ENCODE measurements at regions of chrX and their contacts with region 1.

Region 1: GRCh38 chrX:56248492-56248891 is 16.3 kb downstream of the KLF8 start:
- DNase-seq: peak; percentile 40
- ATAC-seq: peak; percentile 95
- H3K4me3 ChIP-seq: no peak overlapping the region
- H3K27ac ChIP-seq: no peak overlapping the region
- H3K4me1 ChIP-seq: peaks cover 3% of the 10 kb centered on the region; the same call in 1 of the 2 replicates
- H3K27me3 ChIP-seq: no peaks in the 10 kb centered on the region
- CTCF ChIP-seq: peak; percentile 70 to 88 (median 75)
- EP300 ChIP-seq: no peak
- POLR2A ChIP-seq: no peak
- RAD21 ChIP-seq: peak; percentile 95

Region 2: GRCh38 chrX:54683655-54684054 is 1564.8 kb before region 1 on chrX:
- CTCF ChIA-PET with region 1: no interaction called
- POLR2A ChIA-PET with region 1: no interaction called
- RAD21 ChIA-PET with region 1: no interaction called
- SMC1A ChIA-PET with region 1: no interaction called
- in situ Hi-C with region 1: no loop called
- intact Hi-C with region 1: no loop called
- DNase-seq: no peak
- ATAC-seq: no peak
- H3K4me3 ChIP-seq: no peak overlapping the region
- H3K27ac ChIP-seq: no peak overlapping the region
- H3K4me1 ChIP-seq: no peaks in the 10 kb centered on the region
- H3K27me3 ChIP-seq: no peaks in the 10 kb centered on the region
- CTCF ChIP-seq: no peak
- EP300 ChIP-seq: no peak
- POLR2A ChIP-seq: no peak
- RAD21 ChIP-seq: no peak

Region 3: GRCh38 chrX:55160685-55161552 is 1087.6 kb before region 1 on chrX:
- CTCF ChIA-PET with region 1: no interaction called
- POLR2A ChIA-PET with region 1: no interaction called
- RAD21 ChIA-PET with region 1: no interaction called
- SMC1A ChIA-PET with region 1: no interaction called
- in situ Hi-C with region 1: loop called (anchors 25 kb)
- intact Hi-C with region 1: loop called (anchors 5 kb)
- DNase-seq: peak; percentile 64
- ATAC-seq: peak; percentile 96
- H3K4me3 ChIP-seq: peak overlapping the region; percentile 60
- H3K27ac ChIP-seq: peak overlapping the region; percentile 78
- H3K4me1 ChIP-seq: no peaks in the 10 kb centered on the region
- H3K27me3 ChIP-seq: no peaks in the 10 kb centered on the region
- CTCF ChIP-seq: peak; percentile 57 to 65 (median 63)
- EP300 ChIP-seq: no peak
- POLR2A ChIP-seq: peak; percentile 84
- RAD21 ChIP-seq: peak; percentile 66

Region 4: GRCh38 chrX:55717521-55718497 is 530.7 kb before region 1 on chrX and contains the start of gene RRAGB:
- CTCF ChIA-PET with region 1: interaction called, 4 read pairs
- POLR2A ChIA-PET with region 1: no interaction called
- RAD21 ChIA-PET with region 1: interaction called, 4 read pairs
- SMC1A ChIA-PET with region 1: interaction called, 8 read pairs
- in situ Hi-C with region 1: no loop called
- intact Hi-C with region 1: loop called (anchors 5 kb)
- DNase-seq: peak; percentile 90
- ATAC-seq: peak; percentile 96
- H3K4me3 ChIP-seq: peak within 1 kb of the TSS; percentile 63
- H3K27ac ChIP-seq: peak within 1 kb of the TSS; percentile 84
- H3K4me1 ChIP-seq: no peaks in the 10 kb centered on the region
- H3K27me3 ChIP-seq: no peaks in the 10 kb centered on the region
- CTCF ChIP-seq: peak; percentile 42 to 65 (median 52); a peak in 5 of 6 replicates
- EP300 ChIP-seq: no peak
- POLR2A ChIP-seq: peak; percentile 80
- RAD21 ChIP-seq: peak; percentile 56
- polyA plus RNA-seq, gene RRAGB: 9.2 to 12.4 TPM

Region 5: GRCh38 chrX:55907968-55908607 is 340.4 kb before region 1 on chrX:
- CTCF ChIA-PET with region 1: interaction called, 16 read pairs
- POLR2A ChIA-PET with region 1: no interaction called
- RAD21 ChIA-PET with region 1: interaction called, 6 read pairs
- SMC1A ChIA-PET with region 1: interaction called, 12 read pairs
- in situ Hi-C with region 1: no loop called
- intact Hi-C with region 1: loop called (anchors 2 kb)
- DNase-seq: no peak
- ATAC-seq: peak; percentile 78
- H3K4me3 ChIP-seq: peak overlapping the region; percentile 76
- H3K27ac ChIP-seq: peak overlapping the region; percentile 87
- H3K4me1 ChIP-seq: no peaks in the 10 kb centered on the region; the same call in 1 of the 2 replicates
- H3K27me3 ChIP-seq: no peaks in the 10 kb centered on the region
- CTCF ChIP-seq: peak; percentile 52 to 60 (median 58)
- EP300 ChIP-seq: no peak
- POLR2A ChIP-seq: no peak
- RAD21 ChIP-seq: peak; percentile 58

Region 6: GRCh38 chrX:56232221-56233082 is 16.0 kb before region 1 on chrX and contains the start of gene KLF8:
- CTCF ChIA-PET with region 1: interaction called, 58 read pairs
- POLR2A ChIA-PET with region 1: interaction called, 5 read pairs
- RAD21 ChIA-PET with region 1: interaction called, 18 read pairs
- SMC1A ChIA-PET with region 1: interaction called, 26 read pairs
- in situ Hi-C with region 1: no loop called
- intact Hi-C with region 1: no loop called
- DNase-seq: no peak
- ATAC-seq: peak; percentile 79
- H3K4me3 ChIP-seq: peak within 1 kb of the TSS; percentile 49
- H3K27ac ChIP-seq: peak within 1 kb of the TSS; percentile 25; the same call in 1 of the 2 replicates
- H3K4me1 ChIP-seq: no peaks in the 10 kb centered on the region
- H3K27me3 ChIP-seq: no peaks in the 10 kb centered on the region
- CTCF ChIP-seq: no peak
- EP300 ChIP-seq: no peak
- POLR2A ChIP-seq: no peak
- RAD21 ChIP-seq: no peak
- polyA plus RNA-seq, gene KLF8: 0.31 to 0.39 TPM

Measured in GM12878 (cell line).